B cell (primary cell): ENCODE measurements at regions of chr1 and their contacts with region 1.

Region 1: DNA sequence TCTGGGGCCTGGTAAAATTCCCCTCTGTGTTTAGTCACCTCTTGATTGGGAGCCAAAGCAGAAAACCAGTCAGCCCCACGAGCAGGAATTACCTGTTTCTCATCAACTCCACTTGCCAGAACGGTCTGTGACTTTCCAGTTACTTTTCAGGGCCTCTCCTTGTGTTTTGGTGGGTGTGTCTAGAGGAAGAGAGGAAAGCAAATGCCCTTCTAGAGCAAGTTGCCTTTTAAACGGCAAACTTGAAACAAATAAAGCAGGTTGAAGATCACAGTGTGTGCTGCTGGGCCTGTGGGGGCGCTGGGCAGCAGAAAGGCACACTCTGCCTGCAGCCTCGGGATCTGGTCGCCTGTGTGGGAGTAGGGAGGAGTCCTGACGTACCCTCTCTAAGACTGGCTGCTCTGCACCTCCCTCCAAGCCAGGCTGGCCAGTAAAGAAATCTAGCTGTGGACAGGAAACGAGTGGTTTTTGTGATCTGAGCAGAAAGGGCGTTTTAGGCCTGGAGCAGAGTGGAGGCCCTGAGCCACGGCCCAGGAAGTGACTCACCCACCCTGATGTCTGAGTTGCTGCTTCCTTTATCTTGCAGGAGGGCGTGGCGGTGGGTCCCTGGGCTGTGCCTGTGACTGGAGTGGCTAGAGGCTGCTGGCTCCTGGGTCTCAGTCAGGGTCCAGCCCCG is 11.1 kb upstream of the S100A11 start:
- DNase-seq: peak; percentile 88
- ATAC-seq: peak; percentile 92
- H3K4me3 ChIP-seq: peak overlapping the region in 4 of 5 experiments; percentile 14 to 30 (median 19)
- H3K4me3 Mint-ChIP-seq: peak overlapping the region; percentile 76
- H3K27ac ChIP-seq: peak overlapping the region; percentile 93 to 97
- H3K27ac Mint-ChIP-seq: peak overlapping the region; percentile 97
- H3K4me1 ChIP-seq: peaks cover 17 to 19% of the 10 kb centered on the region in 2 donors
- H3K4me1 Mint-ChIP-seq: peaks cover 16% of the 10 kb centered on the region
- H3K27me3 ChIP-seq: no peaks in the 10 kb centered on the region
- H3K27me3 Mint-ChIP-seq: peaks cover 5% of the 10 kb centered on the region
- CTCF ChIP-seq: peak; percentile 48

Region 2: GRCh38 chr1:152034646-152035405 is 13.0 kb before region 1 on chr1:
- CTCF ChIA-PET with region 1: interaction called, 25 read pairs
- POLR2A ChIA-PET with region 1: interaction called, 3 read pairs
- intact Hi-C with region 1: loop called (anchors 1 kb)
- DNase-seq: peak; percentile 73
- ATAC-seq: peak; percentile 48
- H3K4me3 ChIP-seq: peak overlapping the region in 4 of 5 experiments; percentile 14 to 88 (median 66)
- H3K4me3 Mint-ChIP-seq: peak overlapping the region; percentile 90
- H3K27ac ChIP-seq: peak overlapping the region; percentile 34 to 80
- H3K27ac Mint-ChIP-seq: peak overlapping the region; percentile 94
- H3K4me1 ChIP-seq: peaks cover 30 to 38% of the 10 kb centered on the region in 2 donors
- H3K4me1 Mint-ChIP-seq: peaks cover 38% of the 10 kb centered on the region
- H3K27me3 ChIP-seq: no peaks in the 10 kb centered on the region
- H3K27me3 Mint-ChIP-seq: no peaks in the 10 kb centered on the region
- CTCF ChIP-seq: peak; percentile 83

Region 3: GRCh38 chr1:152440635-152441471 is 393.0 kb after region 1 on chr1:
- CTCF ChIA-PET with region 1: no interaction called
- POLR2A ChIA-PET with region 1: no interaction called
- intact Hi-C with region 1: loop called (anchors 2 kb)
- DNase-seq: peak; percentile 78
- ATAC-seq: peak; percentile 95
- H3K4me3 ChIP-seq: no peak overlapping the region
- H3K4me3 Mint-ChIP-seq: no peak overlapping the region
- H3K27ac ChIP-seq: no peak overlapping the region
- H3K27ac Mint-ChIP-seq: no peak overlapping the region
- H3K4me1 ChIP-seq: peaks cover 0 to 3% of the 10 kb centered on the region in 2 donors
- H3K4me1 Mint-ChIP-seq: peaks cover 2% of the 10 kb centered on the region
- H3K27me3 ChIP-seq: peaks cover 0 to 19% (median 3%) of the 10 kb centered on the region in 4 experiments
- H3K27me3 Mint-ChIP-seq: peaks cover 28% of the 10 kb centered on the region
- CTCF ChIP-seq: peak; percentile 79